MCF 10A (cell line): ENCODE measurements at regions of chr20 and their contacts with region 1.

Region 1: GRCh38 chr20:44966030-44966961 is at the start of gene STK4:
- DNase-seq: peak; percentile 92
- H3K4me3 Mint-ChIP-seq: peak within 1 kb of the TSS; percentile 98
- H3K27ac Mint-ChIP-seq: peak within 1 kb of the TSS; percentile 98
- H3K4me1 Mint-ChIP-seq: peaks cover 57% of the 10 kb centered on the region
- H3K27me3 Mint-ChIP-seq: no peaks in the 10 kb centered on the region
- CTCF ChIP-seq: peak; percentile 25
- total RNA-seq, gene STK4: 47.7 and 51.4 TPM in 2 replicates

Region 2: GRCh38 chr20:44069203-44070011 is 896.9 kb before region 1 on chr20:
- CTCF ChIA-PET with region 1: no interaction called
- POLR2A ChIA-PET with region 1: no interaction called
- intact Hi-C with region 1: no loop called
- DNase-seq: no peak
- H3K4me3 Mint-ChIP-seq: no peak overlapping the region
- H3K27ac Mint-ChIP-seq: no peak overlapping the region
- H3K4me1 Mint-ChIP-seq: no peaks in the 10 kb centered on the region
- H3K27me3 Mint-ChIP-seq: no peaks in the 10 kb centered on the region
- CTCF ChIP-seq: no peak

Region 3: DNA sequence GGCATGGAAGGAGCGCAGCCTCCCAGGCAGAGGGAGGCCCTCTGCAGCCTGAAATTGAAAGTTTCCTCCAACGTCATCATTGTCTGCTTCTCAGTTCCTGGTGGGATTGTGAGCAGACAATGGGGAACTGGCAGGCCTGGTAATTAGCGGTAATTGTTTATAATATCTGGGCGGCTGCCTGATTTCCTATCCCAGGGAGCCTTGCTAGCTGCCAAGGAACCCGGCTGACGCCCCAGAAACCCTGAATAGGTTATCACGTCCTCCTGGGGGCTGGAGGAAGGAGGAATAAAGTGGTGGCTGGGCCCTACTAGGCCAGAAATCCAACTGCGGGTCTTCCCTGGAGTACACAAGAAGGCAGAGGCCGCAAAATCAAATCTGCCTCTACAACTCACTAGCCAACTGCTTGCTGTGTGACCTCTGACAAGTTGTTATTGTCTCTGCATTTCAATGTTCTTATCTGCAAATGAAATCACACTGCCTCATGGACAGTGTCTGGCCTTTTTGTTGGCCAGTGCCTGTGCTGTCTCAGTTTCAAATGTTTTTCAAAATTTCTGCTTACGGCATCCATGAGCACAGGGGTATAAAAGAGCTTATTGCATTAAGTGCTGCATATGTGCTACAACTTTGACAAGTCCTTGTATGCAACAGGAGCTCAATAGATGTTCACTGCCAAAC is 203.7 kb before region 1 on chr20:
- CTCF ChIA-PET with region 1: no interaction called
- POLR2A ChIA-PET with region 1: no interaction called
- intact Hi-C with region 1: no loop called
- DNase-seq: no peak
- H3K4me3 Mint-ChIP-seq: no peak overlapping the region
- H3K27ac Mint-ChIP-seq: no peak overlapping the region
- H3K4me1 Mint-ChIP-seq: peaks cover 12% of the 10 kb centered on the region
- H3K27me3 Mint-ChIP-seq: peaks cover 53% of the 10 kb centered on the region
- CTCF ChIP-seq: no peak

Region 4: GRCh38 chr20:44921447-44921846 is 44.8 kb before region 1 on chr20:
- CTCF ChIA-PET with region 1: no interaction called
- POLR2A ChIA-PET with region 1: no interaction called
- intact Hi-C with region 1: no loop called
- DNase-seq: no peak
- H3K4me3 Mint-ChIP-seq: no peak overlapping the region
- H3K27ac Mint-ChIP-seq: no peak overlapping the region
- H3K4me1 Mint-ChIP-seq: no peaks in the 10 kb centered on the region
- H3K27me3 Mint-ChIP-seq: no peaks in the 10 kb centered on the region
- CTCF ChIP-seq: no peak

Region 5: GRCh38 chr20:44979090-44979621 is 12.9 kb after region 1 on chr20:
- CTCF ChIA-PET with region 1: interaction called, 9 read pairs
- POLR2A ChIA-PET with region 1: interaction called, 28 read pairs
- intact Hi-C with region 1: no loop called
- DNase-seq: no peak
- H3K4me3 Mint-ChIP-seq: no peak overlapping the region
- H3K27ac Mint-ChIP-seq: no peak overlapping the region
- H3K4me1 Mint-ChIP-seq: peaks cover 8% of the 10 kb centered on the region
- H3K27me3 Mint-ChIP-seq: no peaks in the 10 kb centered on the region
- CTCF ChIP-seq: no peak

Region 6: GRCh38 chr20:44990425-44990824 is 24.1 kb after region 1 on chr20:
- CTCF ChIA-PET with region 1: interaction called, 6 read pairs
- POLR2A ChIA-PET with region 1: interaction called, 16 read pairs
- intact Hi-C with region 1: no loop called
- DNase-seq: no peak
- H3K4me3 Mint-ChIP-seq: no peak overlapping the region
- H3K27ac Mint-ChIP-seq: peak overlapping the region; percentile 67
- H3K4me1 Mint-ChIP-seq: peaks cover 19% of the 10 kb centered on the region
- H3K27me3 Mint-ChIP-seq: no peaks in the 10 kb centered on the region
- CTCF ChIP-seq: no peak